Panc1 (cell line): ENCODE measurements at regions of chr16 and their contacts with region 1.

Region 1: DNA sequence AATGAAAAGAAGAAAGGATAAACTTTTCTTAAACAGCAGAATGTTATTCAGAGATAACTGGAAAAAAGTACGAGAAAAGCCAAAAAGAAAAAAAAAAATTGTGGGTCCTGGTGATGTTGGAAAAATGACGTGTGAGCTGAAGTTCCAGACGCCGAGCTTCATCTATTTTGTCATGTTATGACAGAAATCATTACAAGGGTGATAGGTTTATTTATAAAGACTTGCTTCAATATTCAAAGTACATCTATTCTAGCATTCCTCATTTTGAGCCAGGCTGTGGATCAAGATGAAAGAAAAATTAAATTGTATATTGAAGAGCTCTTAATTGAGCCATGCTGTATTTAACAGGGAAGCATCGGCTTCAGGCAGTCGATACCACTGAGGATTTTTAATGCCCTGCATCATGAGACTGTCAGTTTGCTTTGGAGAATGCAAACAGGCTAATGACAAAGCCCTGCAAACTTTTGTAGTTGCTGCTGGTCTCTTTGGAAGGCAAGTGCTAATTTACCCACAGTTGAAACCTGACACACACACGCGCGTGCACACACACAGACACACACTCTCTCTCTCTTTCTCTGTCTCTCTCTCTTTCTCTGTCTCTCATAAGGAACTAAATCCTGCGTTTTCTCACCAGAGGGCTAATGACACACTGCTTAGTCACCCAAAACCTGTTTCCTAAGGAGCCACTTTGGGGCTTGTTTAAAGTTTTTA is 110.7 kb downstream of the WWOX start:
- DNase-seq: no peak
- ATAC-seq: no peak
- H3K4me3 ChIP-seq: no peak overlapping the region
- H3K27ac ChIP-seq: no peak overlapping the region
- H3K4me1 ChIP-seq: no peaks in the 10 kb centered on the region; the same call in 1 of the 2 replicates
- H3K27me3 ChIP-seq: no peaks in the 10 kb centered on the region
- CTCF ChIP-seq: no peak

Region 2: GRCh38 chr16:78195797-78196196 is 14.3 kb before region 1 on chr16:
- CTCF ChIA-PET with region 1: interaction called, 10 read pairs
- POLR2A ChIA-PET with region 1: no interaction called
- in situ Hi-C with region 1: no loop called
- intact Hi-C with region 1: no loop called
- DNase-seq: no peak
- ATAC-seq: no peak
- H3K4me3 ChIP-seq: no peak overlapping the region
- H3K27ac ChIP-seq: no peak overlapping the region
- H3K4me1 ChIP-seq: no peaks in the 10 kb centered on the region; the same call in 1 of the 2 replicates
- H3K27me3 ChIP-seq: no peaks in the 10 kb centered on the region
- CTCF ChIP-seq: no peak